Activated CD4-positive, alpha-beta T cell treated with anti-CD3 and anti-CD28 coated beads, Interleukin-2, amount 10 ng/mL, durations not matched to agents 24 days and 14 days (primary cell): ENCODE measurements at regions of chr11 and their contacts with region 1.

Region 1: DNA sequence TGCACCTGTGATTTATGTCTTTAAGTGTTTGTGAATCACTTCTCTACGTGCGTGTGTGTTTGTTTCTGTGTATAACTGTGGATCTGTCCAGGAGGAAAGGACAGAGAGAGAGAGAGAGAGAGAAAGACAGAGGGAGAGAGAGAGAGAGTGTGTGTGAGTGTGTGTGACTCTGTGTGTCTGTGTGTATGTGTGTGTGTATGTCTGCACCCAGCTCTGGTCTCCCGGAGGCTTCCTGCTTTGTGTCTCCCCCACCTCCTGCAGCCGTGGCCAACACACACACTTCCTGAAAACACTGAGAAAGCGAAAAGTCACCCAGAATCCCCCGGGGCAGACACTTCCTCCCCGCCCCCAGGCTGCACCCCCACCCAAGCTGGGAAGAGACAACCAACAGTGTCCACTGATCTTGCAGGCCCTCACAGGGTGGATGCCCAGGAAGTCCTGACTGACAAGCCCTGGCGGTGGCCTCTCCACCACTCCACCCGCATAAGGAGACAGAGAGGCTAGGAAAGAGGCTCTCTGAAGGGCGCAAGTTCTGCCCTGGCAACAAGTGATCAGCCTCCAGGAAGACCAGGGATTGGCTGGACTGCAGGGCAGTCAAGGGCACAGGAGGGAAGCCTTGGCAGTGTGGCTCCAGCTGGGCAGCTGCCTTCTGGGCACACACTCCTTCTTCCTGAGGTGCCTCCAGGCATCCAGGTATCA is 30.0 kb downstream of the ARAP1 start:
- DNase-seq: peak; percentile 95
- H3K4me3 Mint-ChIP-seq: peak overlapping the region; percentile 95
- H3K27ac Mint-ChIP-seq: peak overlapping the region; percentile 94
- H3K4me1 Mint-ChIP-seq: peaks cover 52% of the 10 kb centered on the region
- H3K27me3 Mint-ChIP-seq: no peaks in the 10 kb centered on the region

Region 2: DNA sequence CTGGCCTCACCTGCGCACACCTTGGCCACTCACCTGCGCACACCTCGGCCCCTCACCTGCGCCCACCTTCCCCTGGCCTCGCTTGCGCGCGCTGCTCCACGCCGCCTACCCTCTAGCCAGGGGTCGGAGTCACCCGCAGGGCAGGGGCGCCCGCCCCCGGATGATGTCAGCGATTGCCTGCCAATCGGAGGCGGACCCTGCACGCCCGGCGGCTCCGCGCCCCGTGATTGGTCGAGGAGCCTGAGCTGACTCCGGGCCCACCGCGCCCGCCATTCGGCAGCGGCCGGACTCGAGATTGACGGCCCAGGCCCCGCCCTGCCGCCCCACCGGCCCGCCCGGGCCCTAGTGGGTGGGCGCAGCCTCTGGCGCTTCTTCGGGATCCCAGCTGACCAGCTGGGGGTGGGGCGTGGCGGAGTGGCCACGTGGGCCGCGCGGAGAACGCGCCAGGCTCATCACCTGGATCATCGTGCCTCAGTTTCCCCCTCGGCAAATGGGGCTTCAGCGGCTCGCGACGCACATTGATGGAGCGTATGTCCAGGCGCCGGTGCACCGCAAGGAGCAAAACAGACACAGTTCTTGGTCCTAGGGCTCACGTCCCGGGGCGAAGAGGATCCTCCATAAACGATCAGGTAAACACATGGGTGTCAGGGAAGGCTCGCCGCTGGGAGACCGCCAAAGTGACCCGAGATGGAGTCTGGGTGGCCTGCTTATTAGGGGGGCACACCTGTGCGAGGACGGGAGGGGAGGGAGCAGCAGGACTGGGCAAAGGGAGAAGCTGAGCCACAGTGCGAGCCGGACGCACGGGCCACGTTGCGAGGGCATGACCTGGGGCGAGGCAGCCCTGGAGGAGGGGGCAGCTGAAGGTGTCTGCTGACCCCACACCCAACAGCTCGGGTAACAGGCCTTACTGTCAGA is 1273.7 kb before region 1 on chr11 and contains the start of gene DHCR7:
- intact Hi-C with region 1: no loop called
- DNase-seq: peak; percentile 99
- H3K4me3 Mint-ChIP-seq: peak within 1 kb of the TSS; percentile 93
- H3K27ac Mint-ChIP-seq: peak within 1 kb of the TSS; percentile 89
- H3K4me1 Mint-ChIP-seq: peaks cover 50% of the 10 kb centered on the region
- H3K27me3 Mint-ChIP-seq: no peaks in the 10 kb centered on the region
- total RNA-seq, gene DHCR7: 112 and 116 TPM in 2 replicates

Region 3: DNA sequence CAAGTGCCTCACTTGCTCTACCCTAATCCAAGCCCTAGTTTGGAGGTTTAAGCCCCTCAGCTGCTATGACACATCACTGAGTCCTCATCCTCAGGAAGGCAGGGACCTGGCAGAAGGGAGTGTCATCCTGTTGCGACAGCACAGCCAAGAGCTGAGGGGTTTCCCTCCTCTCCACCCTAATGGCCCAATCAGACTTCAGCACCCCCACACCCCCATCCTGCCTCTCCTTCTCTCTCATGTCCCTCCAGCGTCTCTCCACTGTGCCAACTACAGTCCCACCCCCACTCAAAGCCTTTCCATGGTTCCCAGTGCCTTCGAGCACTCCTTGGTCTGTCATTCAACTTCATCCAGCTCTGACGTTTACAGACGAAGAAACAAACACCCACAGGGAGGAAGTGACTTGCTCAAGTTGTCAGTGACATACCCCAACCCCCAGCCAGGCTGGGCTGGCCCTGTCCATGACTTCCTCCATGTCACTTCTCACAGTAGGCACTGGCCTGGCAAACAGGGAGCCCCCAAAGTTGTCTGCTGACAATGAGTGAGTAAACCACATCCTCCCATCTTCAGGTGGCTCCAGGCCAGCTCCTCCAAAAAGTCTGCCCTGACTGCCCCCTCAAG is 14.4 kb after region 1 on chr11:
- intact Hi-C with region 1: loop called (anchors 1 kb)
- DNase-seq: peak; percentile 89
- H3K4me3 Mint-ChIP-seq: peak overlapping the region; percentile 61
- H3K27ac Mint-ChIP-seq: peak overlapping the region; percentile 91
- H3K4me1 Mint-ChIP-seq: peaks cover 44% of the 10 kb centered on the region
- H3K27me3 Mint-ChIP-seq: no peaks in the 10 kb centered on the region

Region 4: DNA sequence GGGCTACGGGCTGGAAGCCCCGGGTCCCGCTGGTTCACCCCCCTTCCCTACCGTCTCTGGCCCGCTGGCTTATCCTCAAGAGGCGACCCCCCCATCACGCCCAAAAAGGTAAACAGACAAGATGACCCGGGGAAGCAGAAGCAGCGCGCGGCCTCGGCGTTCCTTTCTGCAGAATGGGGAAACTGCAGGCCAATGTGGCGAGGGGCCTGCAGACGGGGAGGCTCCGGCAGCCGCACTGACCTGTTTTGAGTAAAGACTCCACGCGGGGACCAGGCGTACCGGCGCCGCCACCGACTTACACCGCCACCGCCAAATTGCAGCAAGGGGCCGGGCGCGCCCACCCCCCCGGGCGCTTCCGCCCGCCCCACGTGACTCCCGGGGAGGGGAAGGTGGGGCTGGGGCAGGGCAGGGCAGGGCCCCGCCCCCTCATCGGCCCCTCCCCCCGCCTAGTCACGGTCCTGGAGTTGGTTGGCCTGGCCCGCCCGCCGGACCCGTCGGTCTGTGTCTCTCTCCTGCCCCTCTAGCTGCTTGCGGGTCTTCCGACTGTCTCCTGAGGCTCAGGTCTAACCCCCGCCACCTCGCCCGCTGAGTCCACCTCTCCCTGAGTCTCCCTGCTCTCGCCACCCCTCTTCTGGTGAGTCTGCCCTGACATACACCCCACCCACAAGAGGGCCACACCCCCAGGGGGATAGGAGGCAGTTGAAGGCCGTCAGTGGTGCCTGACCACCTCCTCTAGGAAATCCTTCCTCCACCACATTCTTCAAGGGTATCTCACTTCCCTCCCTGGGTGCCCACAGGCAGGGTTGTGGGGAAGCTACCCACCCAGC is 30.1 kb after region 1 on chr11 and contains the start of gene ARAP1:
- intact Hi-C with region 1: loop called (anchors 1 kb)
- DNase-seq: peak; percentile 91
- H3K4me3 Mint-ChIP-seq: peak within 1 kb of the TSS; percentile 87
- H3K27ac Mint-ChIP-seq: peak within 1 kb of the TSS; percentile 94
- H3K4me1 Mint-ChIP-seq: peaks cover 24% of the 10 kb centered on the region
- H3K27me3 Mint-ChIP-seq: no peaks in the 10 kb centered on the region
- total RNA-seq, gene ARAP1: 76.9 and 81.5 TPM in 2 replicates

Region 5: GRCh38 chr11:72793425-72794367 is 71.5 kb after region 1 on chr11 and contains the start of gene STARD10:
- intact Hi-C with region 1: loop called (anchors 1 kb)
- DNase-seq: peak; percentile 99
- H3K4me3 Mint-ChIP-seq: peak within 1 kb of the TSS; percentile 94
- H3K27ac Mint-ChIP-seq: peak within 1 kb of the TSS; percentile 99
- H3K4me1 Mint-ChIP-seq: peaks cover 23% of the 10 kb centered on the region
- H3K27me3 Mint-ChIP-seq: no peaks in the 10 kb centered on the region
- total RNA-seq, gene STARD10: 16.3 and 17.2 TPM in 2 replicates

Region 6: DNA sequence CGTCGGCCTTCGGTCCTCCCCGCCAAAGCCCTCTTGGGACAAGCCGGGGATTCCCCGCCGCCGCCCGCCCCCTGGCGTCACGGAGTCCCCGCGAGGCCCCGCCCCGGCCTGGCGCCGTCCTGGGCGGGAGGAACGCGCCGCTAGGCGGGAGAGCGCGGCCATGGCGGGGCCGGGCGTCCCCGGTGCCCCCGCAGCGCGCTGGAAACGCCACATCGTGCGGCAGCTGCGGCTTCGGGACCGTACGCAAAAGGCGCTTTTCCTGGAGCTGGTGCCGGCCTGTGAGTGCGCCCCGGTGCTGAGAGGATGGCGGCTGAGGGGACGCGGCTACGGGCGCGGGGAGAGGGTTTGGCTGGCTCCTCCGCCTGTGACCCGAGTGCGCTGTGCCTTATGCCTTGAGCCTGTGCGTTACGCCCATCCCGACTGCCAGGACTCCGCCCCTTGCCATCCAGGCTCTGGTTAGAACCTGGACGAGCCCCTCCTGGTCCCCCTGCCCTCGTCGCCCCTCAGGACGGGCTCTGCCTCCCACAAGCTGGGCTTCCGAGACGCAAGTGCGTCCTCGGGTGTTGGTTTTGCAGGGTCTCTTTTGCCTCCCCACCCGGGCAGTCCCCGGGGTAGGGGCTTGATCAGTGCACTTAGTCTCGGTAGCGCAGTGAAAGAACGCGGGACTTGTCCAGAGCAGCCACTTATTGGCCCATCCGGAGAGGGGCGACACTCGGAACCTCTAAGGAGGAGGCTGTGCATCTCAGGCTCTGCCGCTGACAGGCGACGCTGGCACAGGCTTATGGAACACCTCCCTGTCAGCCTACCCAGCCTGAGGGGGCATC is 92.3 kb after region 1 on chr11 and contains the start of gene ATG16L2:
- intact Hi-C with region 1: loop called (anchors 1 kb)
- DNase-seq: peak; percentile 98
- H3K4me3 Mint-ChIP-seq: peak within 1 kb of the TSS; percentile 92
- H3K27ac Mint-ChIP-seq: peak within 1 kb of the TSS; percentile 100
- H3K4me1 Mint-ChIP-seq: peaks cover 44% of the 10 kb centered on the region
- H3K27me3 Mint-ChIP-seq: no peaks in the 10 kb centered on the region
- total RNA-seq, gene ATG16L2: 74.1 and 75.8 TPM in 2 replicates

Region 7: DNA sequence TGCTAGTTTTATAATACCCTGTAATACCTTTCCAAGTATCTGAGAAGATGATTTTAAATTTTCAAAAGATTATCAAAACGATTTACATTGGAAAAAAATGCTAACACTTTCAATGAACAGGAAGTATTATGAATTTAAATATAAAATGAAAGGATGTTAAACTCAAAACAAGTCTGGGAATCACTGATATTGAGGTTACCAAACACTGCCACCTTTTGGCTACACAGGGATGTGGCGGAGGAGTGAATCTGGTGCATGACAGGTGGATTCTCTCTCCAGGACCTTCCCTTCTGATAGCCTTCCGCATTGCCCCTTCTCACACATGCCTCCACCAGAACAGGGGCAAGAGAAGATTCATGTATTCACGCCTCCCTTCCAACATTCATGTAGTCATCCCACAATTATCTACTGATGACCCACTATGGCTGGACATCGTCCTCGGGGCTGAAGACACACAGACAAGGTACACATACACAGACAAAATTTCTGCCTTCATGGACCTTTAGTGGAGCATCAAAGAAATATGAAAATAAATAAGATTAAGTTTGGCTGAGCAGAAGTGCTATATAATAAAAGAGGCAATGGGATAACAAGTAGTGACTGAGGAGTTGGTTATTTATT is 126.8 kb after region 1 on chr11:
- intact Hi-C with region 1: loop called (anchors 1 kb)
- DNase-seq: peak; percentile 82
- H3K4me3 Mint-ChIP-seq: no peak overlapping the region
- H3K27ac Mint-ChIP-seq: no peak overlapping the region
- H3K4me1 Mint-ChIP-seq: peaks cover 11% of the 10 kb centered on the region
- H3K27me3 Mint-ChIP-seq: no peaks in the 10 kb centered on the region

Region 8: GRCh38 chr11:73106347-73106746 is 384.1 kb after region 1 on chr11:
- intact Hi-C with region 1: no loop called
- DNase-seq: no peak
- H3K4me3 Mint-ChIP-seq: no peak overlapping the region
- H3K27ac Mint-ChIP-seq: no peak overlapping the region
- H3K4me1 Mint-ChIP-seq: peaks cover 4% of the 10 kb centered on the region
- H3K27me3 Mint-ChIP-seq: no peaks in the 10 kb centered on the region

Region 9: GRCh38 chr11:73177778-73178577 is 455.8 kb after region 1 on chr11:
- intact Hi-C with region 1: loop called (anchors 1 kb)
- DNase-seq: peak; percentile 93
- H3K4me3 Mint-ChIP-seq: no peak overlapping the region
- H3K27ac Mint-ChIP-seq: no peak overlapping the region
- H3K4me1 Mint-ChIP-seq: peaks cover 13% of the 10 kb centered on the region
- H3K27me3 Mint-ChIP-seq: peaks cover 18% of the 10 kb centered on the region

Region 10: DNA sequence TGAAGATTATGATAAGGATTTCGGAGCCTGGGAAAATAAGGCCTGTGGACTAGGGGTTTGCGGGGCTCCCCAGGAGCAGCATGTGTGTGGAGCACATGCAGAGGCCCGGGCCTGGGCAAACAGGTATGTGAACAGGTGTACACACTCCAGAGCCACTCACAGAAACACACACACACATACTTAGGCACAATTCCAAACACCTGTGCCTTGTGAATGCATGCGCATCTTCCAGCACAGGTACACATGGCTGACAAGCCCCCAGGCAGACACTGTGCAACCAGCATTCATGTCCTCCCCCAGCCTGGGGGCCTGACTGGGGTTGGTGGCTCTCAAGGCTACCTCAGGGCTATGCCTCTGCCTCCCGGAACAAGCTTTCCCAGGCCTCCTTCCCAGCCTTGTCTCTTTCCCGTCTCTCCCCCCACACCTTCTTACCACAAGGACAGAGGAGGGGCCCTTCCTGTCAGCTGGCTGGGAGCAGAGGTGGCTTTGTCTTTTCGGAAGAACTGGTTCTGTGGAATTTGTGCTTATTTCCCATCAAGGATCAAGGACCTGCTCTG is 547.3 kb after region 1 on chr11:
- intact Hi-C with region 1: no loop called
- DNase-seq: no peak
- H3K4me3 Mint-ChIP-seq: no peak overlapping the region
- H3K27ac Mint-ChIP-seq: no peak overlapping the region
- H3K4me1 Mint-ChIP-seq: peaks cover 2% of the 10 kb centered on the region
- H3K27me3 Mint-ChIP-seq: peaks cover 27% of the 10 kb centered on the region